Activated T-helper 2 cell treated with anti-CD3 and anti-CD28 coated beads, Interferon-gamma antibody, Interleukin-2, Interleukin-4, amounts not matched to agents 10 μg/mL and 5 μg/mL and 100 μg/mL, durations not matched to agents 14 hours and 24 hours and 36 hours (primary cell): ENCODE measurements at regions of chrX and their contacts with region 1.

Region 1: GRCh38 chrX:124033821-124034220 is 72.3 kb downstream of the STAG2 start:
- DNase-seq: no peak
- H3K4me3 Mint-ChIP-seq: no peak overlapping the region
- H3K27ac Mint-ChIP-seq: no peak overlapping the region
- H3K4me1 Mint-ChIP-seq: peaks cover 5% of the 10 kb centered on the region
- H3K27me3 Mint-ChIP-seq: no peaks in the 10 kb centered on the region

Region 2: DNA sequence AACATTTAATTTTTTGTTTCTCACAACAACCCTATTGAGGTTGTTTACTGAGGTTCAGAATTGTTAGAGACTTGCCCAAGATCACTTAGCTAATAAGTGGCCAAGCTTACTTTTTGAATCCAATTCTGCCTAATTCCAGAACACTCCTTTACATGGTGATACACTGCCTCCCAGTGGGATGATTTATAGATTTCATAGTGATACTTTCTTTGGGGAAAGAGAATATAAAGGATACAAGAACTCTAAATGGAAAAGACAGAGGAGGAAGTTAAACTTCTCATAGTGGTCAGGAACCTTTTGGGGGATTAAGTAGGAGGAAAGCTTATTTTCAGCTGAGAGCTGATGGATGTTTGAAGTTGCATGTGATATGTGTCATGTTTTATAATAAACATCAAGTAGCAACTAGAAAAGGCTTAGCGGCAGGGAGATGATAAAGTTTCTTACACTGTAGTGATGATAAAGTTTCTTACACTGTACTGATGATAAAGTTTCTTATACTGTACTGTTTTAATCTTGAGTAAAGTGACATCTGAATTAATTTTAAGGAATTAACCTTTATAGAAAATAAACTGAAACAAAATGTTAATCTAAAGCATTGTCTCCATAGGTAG is 57.0 kb before region 1 on chrX:
- intact Hi-C with region 1: no loop called
- DNase-seq: no peak
- H3K4me3 Mint-ChIP-seq: no peak overlapping the region
- H3K27ac Mint-ChIP-seq: no peak overlapping the region
- H3K4me1 Mint-ChIP-seq: peaks cover 22% of the 10 kb centered on the region
- H3K27me3 Mint-ChIP-seq: no peaks in the 10 kb centered on the region

Region 3: GRCh38 chrX:124086411-124086810 is 52.6 kb after region 1 on chrX:
- intact Hi-C with region 1: loop called (anchors 2 kb)
- DNase-seq: peak; percentile 29
- H3K4me3 Mint-ChIP-seq: no peak overlapping the region
- H3K27ac Mint-ChIP-seq: peak overlapping the region; percentile 62
- H3K4me1 Mint-ChIP-seq: peaks cover 21% of the 10 kb centered on the region
- H3K27me3 Mint-ChIP-seq: no peaks in the 10 kb centered on the region